ENCODE measurements at regions of chr6 and their contacts with region 1.

Region 1: DNA sequence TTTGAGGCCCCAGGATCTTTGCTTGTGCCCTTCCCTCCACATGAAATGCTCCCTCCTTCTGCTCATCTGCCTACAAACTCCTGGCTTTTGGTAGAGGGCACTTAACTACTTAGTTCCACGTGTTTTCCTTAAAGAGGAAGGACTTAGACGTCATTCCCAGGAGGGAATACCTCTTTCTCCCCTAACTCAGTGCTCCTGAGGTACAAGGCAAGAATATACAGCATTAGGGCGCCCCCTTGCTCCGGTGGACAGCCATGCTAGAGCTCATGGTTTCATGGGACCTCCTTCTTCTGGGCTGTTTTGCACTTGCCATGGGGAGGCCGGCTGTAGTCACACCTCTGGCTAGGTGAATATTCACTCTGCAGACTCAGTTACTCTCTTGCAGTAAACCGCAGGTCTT is 93.8 kb upstream of the LY86 start:
- DNase-seq: peak; percentile 45
- ATAC-seq: peak; percentile 100
- H3K4me3 ChIP-seq: no peak overlapping the region
- H3K27ac ChIP-seq: no peak overlapping the region
- H3K4me1 ChIP-seq: no peaks in the 10 kb centered on the region
- H3K27me3 ChIP-seq: no peaks in the 10 kb centered on the region
- CTCF ChIP-seq: peak; percentile 74 to 84 (median 78)
- EP300 ChIP-seq: no peak
- POLR2A ChIP-seq: no peak
- RAD21 ChIP-seq: peak; percentile 86

Region 2: GRCh38 chr6:6105472-6106036 is 389.1 kb before region 1 on chr6:
- CTCF ChIA-PET with region 1: interaction called, 24 read pairs
- POLR2A ChIA-PET with region 1: no interaction called
- RAD21 ChIA-PET with region 1: interaction called, 16 read pairs
- SMC1A ChIA-PET with region 1: interaction called, 6 read pairs
- in situ Hi-C with region 1: no loop called
- intact Hi-C with region 1: no loop called
- DNase-seq: no peak
- ATAC-seq: peak; percentile 92
- H3K4me3 ChIP-seq: no peak overlapping the region
- H3K27ac ChIP-seq: no peak overlapping the region
- H3K4me1 ChIP-seq: no peaks in the 10 kb centered on the region
- H3K27me3 ChIP-seq: no peaks in the 10 kb centered on the region
- CTCF ChIP-seq: peak; percentile 14 to 44 (median 40); a peak in 4 of 6 replicates
- EP300 ChIP-seq: no peak
- POLR2A ChIP-seq: no peak
- RAD21 ChIP-seq: peak; percentile 47

Region 3: GRCh38 chr6:6221787-6222535 is 272.7 kb before region 1 on chr6:
- CTCF ChIA-PET with region 1: interaction called, 10 read pairs
- POLR2A ChIA-PET with region 1: no interaction called
- RAD21 ChIA-PET with region 1: interaction called, 17 read pairs
- SMC1A ChIA-PET with region 1: interaction called, 11 read pairs
- in situ Hi-C with region 1: no loop called
- intact Hi-C with region 1: no loop called
- DNase-seq: no peak
- ATAC-seq: peak; percentile 68
- H3K4me3 ChIP-seq: no peak overlapping the region
- H3K27ac ChIP-seq: no peak overlapping the region
- H3K4me1 ChIP-seq: no peaks in the 10 kb centered on the region
- H3K27me3 ChIP-seq: no peaks in the 10 kb centered on the region
- CTCF ChIP-seq: peak; percentile 33 to 44 (median 33); a peak in 4 of 6 replicates
- EP300 ChIP-seq: no peak
- POLR2A ChIP-seq: no peak
- RAD21 ChIP-seq: peak; percentile 52

Region 4: DNA sequence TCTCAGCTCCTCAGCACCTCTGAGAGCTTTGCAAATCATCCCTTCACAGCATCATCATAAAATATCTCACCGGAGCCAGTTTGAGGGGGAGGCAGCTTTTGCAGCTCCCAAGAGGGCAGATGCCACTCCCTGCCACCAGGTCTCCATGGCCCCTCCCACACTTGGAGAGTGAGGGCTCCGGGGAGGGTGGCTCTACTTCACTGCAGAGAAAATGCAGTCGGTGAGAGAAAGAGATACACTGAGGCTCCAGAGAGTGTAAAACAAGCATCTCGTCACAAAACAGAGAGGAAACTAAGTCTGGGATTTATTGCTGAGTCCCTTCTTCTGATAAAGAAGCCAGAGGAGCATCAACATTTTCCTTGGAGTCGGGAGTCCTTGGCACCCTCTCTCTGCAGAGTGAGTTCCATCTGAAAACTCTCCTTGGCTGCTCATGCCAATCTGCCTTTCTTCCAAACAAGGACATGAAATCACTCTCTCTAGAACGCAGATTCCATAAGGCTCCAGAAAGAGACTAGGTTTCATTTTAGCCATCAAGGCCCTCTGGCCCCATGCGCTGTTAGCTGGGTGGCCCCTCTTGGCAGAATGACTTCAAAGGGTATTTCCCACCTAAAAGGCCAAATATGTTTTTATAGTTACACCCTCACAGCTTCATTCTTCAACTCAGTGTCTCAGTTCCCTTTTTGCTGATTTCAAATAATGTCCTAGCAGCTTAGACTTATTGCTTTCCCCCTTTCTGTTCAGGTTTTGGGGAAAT is 103.7 kb before region 1 on chr6:
- CTCF ChIA-PET with region 1: interaction called, 10 read pairs
- POLR2A ChIA-PET with region 1: interaction called, 5 read pairs
- RAD21 ChIA-PET with region 1: interaction called, 40 read pairs
- SMC1A ChIA-PET with region 1: interaction called, 37 read pairs
- in situ Hi-C with region 1: no loop called
- intact Hi-C with region 1: loop called (anchors 1 kb)
- DNase-seq: peak; percentile 78
- ATAC-seq: peak; percentile 74
- H3K4me3 ChIP-seq: peak overlapping the region; percentile 40
- H3K27ac ChIP-seq: peak overlapping the region; percentile 96
- H3K4me1 ChIP-seq: peaks cover 37% of the 10 kb centered on the region
- H3K27me3 ChIP-seq: no peaks in the 10 kb centered on the region
- CTCF ChIP-seq: no peak
- EP300 ChIP-seq: peak; percentile 40 to 71; a peak in 3 of 4 replicates
- POLR2A ChIP-seq: peak; percentile 40; the same call in 1 of the 2 replicates
- RAD21 ChIP-seq: peak; percentile 21; the same call in 1 of the 2 replicates

Region 5: GRCh38 chr6:6515691-6516607 is 21.3 kb after region 1 on chr6:
- CTCF ChIA-PET with region 1: interaction called, 5 read pairs
- POLR2A ChIA-PET with region 1: no interaction called
- RAD21 ChIA-PET with region 1: interaction called, 5 read pairs
- SMC1A ChIA-PET with region 1: interaction called, 11 read pairs
- in situ Hi-C with region 1: no loop called
- intact Hi-C with region 1: no loop called
- DNase-seq: peak; percentile 84
- ATAC-seq: peak; percentile 89
- H3K4me3 ChIP-seq: no peak overlapping the region
- H3K27ac ChIP-seq: peak overlapping the region; percentile 34
- H3K4me1 ChIP-seq: peaks cover 26% of the 10 kb centered on the region
- H3K27me3 ChIP-seq: no peaks in the 10 kb centered on the region
- CTCF ChIP-seq: no peak
- EP300 ChIP-seq: peak; percentile 82 to 96
- POLR2A ChIP-seq: no peak
- RAD21 ChIP-seq: no peak